Pancreas (tissue), 10 donors: ENCODE measurements at regions of chr3 and their contacts with region 1.

Region 1: GRCh38 chr3:148727247-148727646 is 29.5 kb downstream of the AGTR1 start:
- DNase-seq: peak in 4 of 6 donors; percentile 36 to 65 (median 57)
- ATAC-seq: peak; percentile 60 to 83 (median 78)
- H3K4me3 ChIP-seq: no peak overlapping the region
- H3K27ac ChIP-seq: no peak overlapping the region
- H3K4me1 ChIP-seq: peaks cover 0 to 37% (median 13%) of the 10 kb centered on the region in 3 donors
- H3K27me3 ChIP-seq: no peaks in the 10 kb centered on the region
- CTCF ChIP-seq: peak; percentile 7 to 32 (median 28)

Region 2: GRCh38 chr3:148379763-148380382 is 347.4 kb before region 1 on chr3:
- intact Hi-C with region 1: loop called in 1 of 3 experiments (anchors 10 kb)
- DNase-seq: peak in 1 of 6 donors; percentile 13
- ATAC-seq: peak; percentile 84 to 99 (median 96)
- H3K4me3 ChIP-seq: no peak overlapping the region
- H3K27ac ChIP-seq: no peak overlapping the region
- H3K4me1 ChIP-seq: no peaks in the 10 kb centered on the region
- H3K27me3 ChIP-seq: no peaks in the 10 kb centered on the region
- CTCF ChIP-seq: peak; percentile 7 to 43 (median 33)

Region 3: DNA sequence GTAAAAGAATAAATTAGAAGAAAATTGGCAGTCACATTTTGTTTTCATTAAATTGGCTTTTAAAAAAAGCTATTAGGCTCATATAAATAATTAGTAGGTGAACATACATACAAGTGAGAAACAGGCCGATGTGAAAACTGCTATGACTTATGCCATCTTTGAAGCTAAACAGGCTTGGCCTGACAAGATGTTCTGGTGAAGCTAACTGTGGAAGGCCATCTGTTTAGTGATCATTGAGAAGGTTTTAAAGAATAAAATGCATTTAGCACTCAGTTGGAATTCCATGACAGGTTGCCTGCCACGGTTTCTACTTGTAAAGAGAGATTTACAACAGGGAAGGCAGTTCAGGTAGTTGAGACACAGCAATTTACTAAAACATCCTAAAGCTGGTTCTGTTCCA is 293.6 kb before region 1 on chr3:
- intact Hi-C with region 1: no loop called
- DNase-seq: no peak
- ATAC-seq: no peak
- H3K4me3 ChIP-seq: no peak overlapping the region
- H3K27ac ChIP-seq: no peak overlapping the region
- H3K4me1 ChIP-seq: no peaks in the 10 kb centered on the region
- H3K27me3 ChIP-seq: no peaks in the 10 kb centered on the region
- CTCF ChIP-seq: no peak

Region 4: GRCh38 chr3:148556664-148557063 is 170.6 kb before region 1 on chr3:
- intact Hi-C with region 1: no loop called
- DNase-seq: no peak
- ATAC-seq: no peak
- H3K4me3 ChIP-seq: no peak overlapping the region
- H3K27ac ChIP-seq: no peak overlapping the region
- H3K4me1 ChIP-seq: no peaks in the 10 kb centered on the region
- H3K27me3 ChIP-seq: no peaks in the 10 kb centered on the region
- CTCF ChIP-seq: no peak

Region 5: DNA sequence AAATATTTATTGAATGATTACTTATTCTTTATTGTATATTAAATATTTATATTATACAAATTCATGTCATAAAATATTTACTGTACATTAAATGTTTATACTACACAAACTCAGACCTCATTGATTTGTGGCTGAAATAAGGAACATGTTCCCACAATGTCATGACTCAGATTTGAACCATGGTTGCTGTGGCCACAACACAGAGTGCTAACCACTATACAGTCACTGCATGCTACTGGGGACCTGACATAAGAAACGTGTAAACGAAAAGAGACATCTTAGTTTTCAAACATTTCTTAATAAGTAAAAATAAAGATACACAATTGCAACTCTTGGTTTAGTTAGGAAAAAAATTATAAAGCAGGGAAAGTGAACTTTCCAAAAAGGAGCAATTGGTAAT is 128.6 kb before region 1 on chr3:
- intact Hi-C with region 1: no loop called
- DNase-seq: no peak
- ATAC-seq: no peak
- H3K4me3 ChIP-seq: no peak overlapping the region
- H3K27ac ChIP-seq: no peak overlapping the region
- H3K4me1 ChIP-seq: peaks cover 3 to 31% (median 31%) of the 10 kb centered on the region in 3 donors
- H3K27me3 ChIP-seq: no peaks in the 10 kb centered on the region
- CTCF ChIP-seq: no peak